Tibial artery (tissue), 4 donors: ENCODE measurements at regions of chr3 and their contacts with region 1.

Region 1: GRCh38 chr3:125916376-125916978 is 52.5 kb upstream of the ROPN1B start:
- DNase-seq: no peak
- H3K4me3 ChIP-seq: peak overlapping the region; percentile 75 to 93
- H3K27ac ChIP-seq: peak overlapping the region; percentile 90 to 97
- H3K4me1 ChIP-seq: peaks cover 0 to 17% (median 5%) of the 10 kb centered on the region in 4 donors
- H3K27me3 ChIP-seq: no peaks in the 10 kb centered on the region
- CTCF ChIP-seq: peak in 1 of 2 experiments; percentile 26

Region 2: DNA sequence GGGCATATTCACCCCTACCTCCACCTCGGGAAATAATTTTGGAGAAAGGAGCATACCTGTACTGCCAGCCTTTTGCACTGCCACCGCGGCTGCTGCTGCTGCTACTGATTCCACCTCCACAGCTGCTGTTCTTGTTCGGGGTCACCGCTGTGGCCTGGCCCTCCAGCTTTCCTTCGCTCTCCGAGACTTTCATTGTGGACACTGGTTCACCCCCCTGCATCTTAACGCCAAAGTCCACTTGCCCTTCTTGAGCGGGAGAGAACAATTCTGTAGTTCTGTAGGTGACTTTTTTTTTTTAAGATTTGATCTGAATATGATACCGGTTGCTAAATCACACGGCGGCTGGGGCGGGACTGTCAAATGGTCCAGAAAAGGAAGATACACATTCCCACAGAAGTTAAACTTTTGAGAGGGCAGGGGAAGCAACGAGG is 321.9 kb before region 1 on chr3:
- intact Hi-C with region 1: loop called (anchors 10 kb)
- DNase-seq: peak in 1 of 2 donors; percentile 39
- H3K4me3 ChIP-seq: peak overlapping the region; percentile 68 to 86
- H3K27ac ChIP-seq: peak overlapping the region; percentile 93 to 97
- H3K4me1 ChIP-seq: peaks cover 0 to 43% (median 28%) of the 10 kb centered on the region in 4 donors
- H3K27me3 ChIP-seq: no peaks in the 10 kb centered on the region
- CTCF ChIP-seq: no peak

Region 3: DNA sequence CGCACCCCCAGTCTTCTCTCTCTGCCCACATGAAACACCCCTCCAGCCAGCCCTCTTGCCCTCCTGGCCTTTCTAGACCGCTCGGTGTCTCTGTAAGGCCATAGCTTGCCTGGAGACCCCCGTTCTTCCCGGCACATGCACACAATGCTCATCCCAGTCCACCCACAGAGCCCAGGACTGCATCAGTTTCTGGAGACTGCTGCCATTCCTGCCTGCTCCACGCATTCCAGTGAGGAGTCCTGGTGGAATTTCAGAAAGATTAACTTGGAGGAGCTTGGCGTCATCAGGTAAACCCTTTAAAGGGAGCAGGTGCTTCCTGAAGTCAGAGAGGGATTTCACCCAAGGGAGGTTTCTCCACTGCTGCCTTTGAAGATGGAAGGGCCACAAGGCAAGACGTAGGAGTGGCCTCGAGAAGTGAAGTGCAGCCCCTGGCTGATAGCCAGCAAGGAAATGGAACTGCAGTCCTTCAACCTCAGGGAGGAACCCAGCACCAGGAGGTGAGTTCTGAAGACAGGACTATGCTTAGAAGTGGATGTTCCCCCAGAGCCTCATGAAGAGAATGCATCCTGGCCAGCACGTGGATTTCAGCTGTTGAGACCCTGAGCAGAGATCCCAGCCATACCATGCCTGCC is 148.3 kb after region 1 on chr3:
- intact Hi-C with region 1: no loop called
- DNase-seq: no peak
- H3K4me3 ChIP-seq: no peak overlapping the region
- H3K27ac ChIP-seq: no peak overlapping the region
- H3K4me1 ChIP-seq: no peaks in the 10 kb centered on the region
- H3K27me3 ChIP-seq: no peaks in the 10 kb centered on the region
- CTCF ChIP-seq: no peak

Region 4: DNA sequence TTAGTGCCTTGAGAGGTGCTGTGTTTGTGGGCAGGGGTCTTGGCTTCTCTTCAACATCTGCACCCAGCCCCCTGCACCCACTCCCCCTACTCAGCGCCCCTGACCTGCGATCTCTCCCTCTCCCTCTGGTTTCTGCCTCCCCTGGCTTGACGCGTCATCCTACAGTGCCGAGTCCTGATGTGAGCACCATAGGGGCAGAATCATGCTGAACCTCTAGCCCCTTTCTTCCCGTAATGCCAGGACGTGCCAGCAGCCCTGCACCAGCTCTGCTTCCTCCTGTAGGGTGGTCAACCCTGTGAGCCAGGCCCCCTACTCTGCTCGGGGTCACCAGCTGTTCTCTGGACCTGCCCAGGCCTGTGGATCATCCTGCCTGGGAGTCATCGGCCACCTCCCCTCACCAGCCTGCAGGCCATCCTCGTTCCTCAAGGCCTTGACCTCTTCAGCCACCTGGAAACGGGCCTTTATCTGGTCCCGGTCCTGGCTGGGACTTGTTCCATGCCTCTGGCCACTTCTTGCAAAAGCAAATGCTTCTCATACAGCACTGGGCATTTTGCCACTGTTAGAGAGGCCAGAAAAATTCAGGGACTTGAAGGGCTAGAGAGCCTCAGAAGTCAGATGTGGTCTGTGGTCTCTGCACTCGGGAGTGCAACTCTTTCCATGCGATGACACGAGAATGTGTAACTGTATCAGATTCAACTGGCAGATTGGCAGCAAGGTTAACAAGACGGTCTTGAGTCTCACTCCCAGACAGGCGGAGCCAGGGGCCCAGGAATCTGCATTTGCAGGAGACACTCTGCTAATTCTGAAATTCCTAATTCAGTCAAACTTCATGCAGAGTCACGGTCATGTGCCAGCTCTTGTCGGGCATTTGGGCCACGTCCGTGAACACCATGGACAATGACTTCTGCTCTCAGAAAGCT is 457.5 kb after region 1 on chr3:
- intact Hi-C with region 1: loop called (anchors 10 kb)
- DNase-seq: peak in 1 of 2 donors; percentile 64
- H3K4me3 ChIP-seq: no peak overlapping the region
- H3K27ac ChIP-seq: no peak overlapping the region
- H3K4me1 ChIP-seq: no peaks in the 10 kb centered on the region
- H3K27me3 ChIP-seq: no peaks in the 10 kb centered on the region
- CTCF ChIP-seq: no peak